ENCODE measurements at regions of chr5 and their contacts with region 1.

Region 1: DNA sequence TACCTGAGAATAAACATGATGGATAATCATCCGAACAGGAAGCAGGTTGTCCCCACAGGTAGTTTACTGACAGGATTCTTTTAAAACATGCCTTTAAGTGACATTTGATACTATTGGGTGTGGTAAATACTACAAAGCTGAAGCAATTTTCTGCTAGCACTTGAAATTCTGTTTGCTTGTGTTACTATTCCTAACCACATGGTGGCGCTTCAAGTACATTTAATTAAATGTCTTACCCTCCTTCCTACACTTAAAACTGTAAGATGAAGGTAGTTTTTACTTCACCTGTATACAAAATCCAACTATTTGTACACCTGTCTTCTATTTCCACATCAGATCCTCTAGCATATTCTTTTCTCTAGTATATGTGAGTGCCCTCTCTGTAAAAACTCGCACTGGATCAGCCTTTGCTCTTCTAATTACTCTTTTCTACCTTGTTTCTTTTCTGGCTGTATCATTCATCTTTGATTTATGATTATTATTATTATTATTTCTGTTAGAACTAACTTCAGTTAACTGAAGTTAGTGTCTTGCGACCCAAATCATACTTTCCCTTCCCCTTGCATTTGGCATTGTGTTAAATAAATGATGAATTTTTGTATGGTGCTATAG is 18.4 kb downstream of the SLC25A46 start:
- DNase-seq: peak in 1 of 3 donors; percentile 55
- ATAC-seq: peak; percentile 64
- H3K4me3 ChIP-seq: no peak overlapping the region
- H3K4me1 ChIP-seq: peaks cover 2% of the 10 kb centered on the region
- CTCF ChIP-seq: peak; percentile 24

Region 2: DNA sequence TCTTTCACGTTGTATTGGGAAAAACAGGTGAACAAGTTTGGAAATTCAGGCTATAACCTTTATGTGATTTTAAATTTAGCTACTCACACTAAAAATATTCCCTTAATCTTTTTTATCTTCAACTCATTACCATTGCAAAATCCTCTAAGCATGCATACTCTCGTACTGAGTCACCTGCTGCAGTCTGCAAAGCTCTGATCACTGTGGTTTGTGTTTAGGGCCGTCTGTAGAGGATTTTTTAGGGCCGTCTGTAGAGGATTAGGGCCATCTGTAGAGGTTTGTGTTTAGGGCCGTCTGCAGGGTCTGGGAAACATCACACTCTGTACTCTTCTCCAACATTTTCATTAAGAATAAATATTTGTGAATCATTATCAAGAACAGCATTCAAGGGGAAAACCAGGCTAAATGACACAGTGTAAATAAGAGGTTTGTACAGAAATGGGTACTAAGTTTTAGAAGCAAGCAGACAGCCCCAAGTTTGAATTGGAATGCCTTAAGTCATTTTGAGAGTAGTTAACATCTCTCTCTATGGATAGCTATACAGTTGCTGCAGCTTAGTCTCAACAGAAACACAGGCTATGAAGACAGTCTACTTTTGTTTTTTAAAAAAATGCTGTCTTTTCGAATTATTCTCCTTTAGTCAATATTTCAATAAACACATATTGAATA is 159.3 kb after region 1 on chr5:
- intact Hi-C with region 1: no loop called
- DNase-seq: peak in 1 of 3 donors; percentile 5
- ATAC-seq: peak; percentile 51
- H3K4me3 ChIP-seq: no peak overlapping the region
- H3K4me1 ChIP-seq: no peaks in the 10 kb centered on the region
- CTCF ChIP-seq: no peak

Region 3: GRCh38 chr5:111092062-111092853 is 335.0 kb after region 1 on chr5 and contains the start of gene WDR36:
- intact Hi-C with region 1: loop called in 1 of 2 experiments (anchors 10 kb)
- DNase-seq: peak; percentile 88 to 94 (median 91)
- ATAC-seq: peak; percentile 100
- H3K4me3 ChIP-seq: peak within 1 kb of the TSS; percentile 94
- H3K4me1 ChIP-seq: peaks cover 24% of the 10 kb centered on the region
- CTCF ChIP-seq: no peak
- total RNA-seq, gene WDR36: 17.1 to 22.4 (median 17.3) TPM

Region 4: DNA sequence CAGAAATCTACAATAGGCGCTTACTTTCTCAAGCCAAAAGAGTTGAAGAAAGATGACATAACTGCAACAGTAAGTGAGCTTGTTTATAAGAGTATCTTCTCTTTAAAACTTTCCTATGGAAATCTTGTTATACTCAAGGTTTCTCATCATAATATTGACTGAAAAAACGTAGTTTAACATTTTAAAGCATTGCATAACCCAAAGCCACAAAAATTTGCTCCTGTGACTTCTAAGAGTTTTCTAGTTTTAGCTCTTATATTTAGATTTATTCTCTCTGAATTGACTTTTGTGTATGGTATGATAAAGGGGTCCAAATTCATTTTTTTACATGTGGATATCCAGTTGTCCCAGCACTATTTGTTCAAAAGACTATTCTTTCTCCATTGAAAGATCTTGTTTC is 350.1 kb after region 1 on chr5:
- intact Hi-C with region 1: loop called in 1 of 2 experiments (anchors 10 kb)
- DNase-seq: no peak
- ATAC-seq: no peak
- H3K4me3 ChIP-seq: no peak overlapping the region
- H3K4me1 ChIP-seq: no peaks in the 10 kb centered on the region
- CTCF ChIP-seq: no peak

Measured in mucosa of descending colon (tissue), 3 donors.